Heart right ventricle (tissue), 16 donors: ENCODE measurements at regions of chr3 and their contacts with region 1.

Region 1: DNA sequence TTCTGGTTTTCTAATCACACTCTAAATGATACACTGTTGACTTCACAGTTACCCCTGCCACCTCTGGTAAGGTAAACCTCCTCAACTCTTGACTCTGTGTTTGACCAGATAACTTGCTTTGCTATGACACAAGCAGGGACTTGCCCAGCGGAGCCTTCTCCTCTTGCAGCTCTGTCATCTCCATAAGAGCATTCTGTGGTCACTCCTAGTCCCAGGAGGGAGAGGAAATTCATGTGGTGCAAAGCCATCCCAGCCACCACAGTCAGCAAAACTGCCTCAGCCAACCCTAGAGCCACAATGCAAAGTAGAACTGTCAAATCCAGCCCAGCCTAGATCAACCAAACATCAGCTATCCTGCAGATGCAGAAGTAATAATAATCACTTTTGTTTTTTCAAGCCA is 144.7 kb upstream of the GADL1 start:
- DNase-seq: no peak
- ATAC-seq: no peak
- H3K4me3 ChIP-seq: no peak overlapping the region
- H3K27ac ChIP-seq: no peak overlapping the region
- H3K4me1 ChIP-seq: no peaks in the 10 kb centered on the region
- H3K27me3 ChIP-seq: no peaks in the 10 kb centered on the region
- CTCF ChIP-seq: no peak

Region 2: DNA sequence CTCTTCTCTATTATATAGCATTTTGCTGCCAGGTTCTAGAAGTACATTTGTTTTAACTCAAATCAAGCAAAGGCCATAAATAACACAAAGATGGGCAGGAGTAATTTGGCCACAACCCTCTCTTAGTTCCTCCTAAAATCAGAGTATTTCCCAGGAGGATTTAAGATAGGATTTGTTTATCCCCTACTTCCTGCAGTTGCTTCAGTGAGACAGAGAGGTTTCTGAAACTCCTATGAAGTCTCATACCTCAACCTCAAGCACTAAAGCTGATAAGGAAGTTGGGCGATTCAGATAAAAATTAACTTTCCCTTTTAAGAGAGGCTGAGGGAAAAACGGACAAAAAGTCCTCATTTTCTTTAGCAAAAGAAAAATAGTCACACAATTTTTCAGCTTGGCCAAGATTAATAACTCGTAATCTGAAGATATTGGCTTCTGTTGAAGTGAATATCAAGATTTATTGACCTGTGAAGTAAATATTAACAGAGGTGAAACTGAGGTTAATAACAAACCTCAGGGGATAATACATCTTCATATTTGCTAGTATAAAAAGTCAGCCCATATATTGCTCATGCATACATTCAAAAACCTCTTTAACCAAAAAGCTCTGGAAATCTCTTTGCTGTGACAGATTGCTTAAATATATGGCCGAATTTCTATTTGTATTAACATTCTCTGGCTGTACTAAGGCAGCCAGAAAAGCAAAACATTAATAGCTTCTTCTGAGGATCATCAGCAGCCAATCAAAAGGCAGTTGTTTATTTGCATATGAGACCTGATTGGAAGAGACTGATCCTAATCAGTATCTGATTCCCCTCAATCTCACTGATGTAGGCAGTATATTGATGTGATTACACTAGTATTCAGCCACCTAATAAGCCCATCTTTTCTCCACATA is 54.0 kb before region 1 on chr3:
- intact Hi-C with region 1: no loop called
- DNase-seq: no peak
- ATAC-seq: peak in 1 of 8 donors; percentile 20
- H3K4me3 ChIP-seq: no peak overlapping the region
- H3K27ac ChIP-seq: no peak overlapping the region
- H3K4me1 ChIP-seq: peaks cover 0 to 4% (median 0%) of the 10 kb centered on the region in 9 donors
- H3K27me3 ChIP-seq: peaks cover 0 to 4% (median 0%) of the 10 kb centered on the region in 7 donors
- CTCF ChIP-seq: no peak

Region 3: GRCh38 chr3:31004025-31004678 is 35.0 kb before region 1 on chr3:
- intact Hi-C with region 1: no loop called
- DNase-seq: no peak
- ATAC-seq: peak in 5 of 8 donors; percentile 19 to 58 (median 45)
- H3K4me3 ChIP-seq: no peak overlapping the region
- H3K27ac ChIP-seq: no peak overlapping the region
- H3K4me1 ChIP-seq: peaks cover 0 to 4% (median 0%) of the 10 kb centered on the region in 9 donors
- H3K27me3 ChIP-seq: no peaks in the 10 kb centered on the region
- CTCF ChIP-seq: no peak

Region 4: GRCh38 chr3:31319332-31319731 is 280.2 kb after region 1 on chr3:
- intact Hi-C with region 1: loop called in 1 of 10 experiments (anchors 5 kb)
- DNase-seq: no peak
- ATAC-seq: no peak
- H3K4me3 ChIP-seq: no peak overlapping the region
- H3K27ac ChIP-seq: no peak overlapping the region
- H3K4me1 ChIP-seq: peaks cover 0 to 5% (median 0%) of the 10 kb centered on the region in 9 donors
- H3K27me3 ChIP-seq: no peaks in the 10 kb centered on the region
- CTCF ChIP-seq: no peak